Natural killer cell (primary cell): ENCODE measurements at regions of chr1 and their contacts with region 1.

Region 1: DNA sequence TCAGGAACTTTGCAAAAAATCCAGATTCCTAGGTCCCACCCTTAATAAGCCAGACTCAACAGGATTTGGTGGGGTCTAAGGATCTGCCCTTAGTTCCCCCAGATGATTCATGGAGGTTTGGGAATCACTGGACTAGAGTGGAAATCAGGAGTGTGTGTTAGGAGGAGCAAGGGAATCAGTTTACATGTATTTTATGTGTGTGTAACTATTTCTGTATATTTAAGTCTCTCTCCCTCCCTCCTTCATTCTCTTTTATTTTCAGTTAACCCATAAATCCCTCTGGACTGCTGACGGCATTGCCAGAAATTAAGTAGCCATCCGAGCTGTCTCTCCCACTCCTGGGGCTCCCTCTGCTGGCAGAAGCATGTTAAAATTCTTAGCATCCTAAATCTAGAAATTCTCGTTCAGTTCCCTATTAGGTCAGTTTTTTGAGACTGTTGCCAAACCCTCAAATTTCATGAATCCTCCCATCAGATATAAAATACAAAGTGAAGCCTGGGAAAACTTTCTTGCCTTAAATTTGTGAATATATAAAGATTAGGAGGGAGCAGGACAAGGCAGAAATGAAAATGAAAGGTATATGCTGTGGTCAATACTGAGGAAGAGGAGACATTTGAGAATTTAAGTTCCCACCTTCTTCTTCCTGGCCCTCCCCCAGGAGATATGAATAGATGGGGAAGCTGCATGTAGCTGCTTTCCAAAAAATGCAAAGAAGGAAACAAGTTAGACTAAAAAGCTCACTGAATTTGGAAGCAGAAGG is 11.7 kb upstream of the HSD11B1 start:
- DNase-seq: peak; percentile 39 to 81
- ATAC-seq: peak; percentile 63 to 65 (median 64)
- H3K4me3 ChIP-seq: no peak overlapping the region
- H3K4me3 Mint-ChIP-seq: no peak overlapping the region
- H3K27ac ChIP-seq: no peak overlapping the region
- H3K27ac Mint-ChIP-seq: no peak overlapping the region
- H3K4me1 ChIP-seq: no peaks in the 10 kb centered on the region
- H3K4me1 Mint-ChIP-seq: peaks cover 9 to 11% of the 10 kb centered on the region in 2 donors
- H3K27me3 ChIP-seq: no peaks in the 10 kb centered on the region
- H3K27me3 Mint-ChIP-seq: peaks cover 0 to 5% of the 10 kb centered on the region in 2 donors
- CTCF ChIP-seq: peak; percentile 86

Region 2: GRCh38 chr1:209576798-209577197 is 116.1 kb before region 1 on chr1:
- intact Hi-C with region 1: loop called (anchors 2 kb)
- DNase-seq: peak; percentile 51 to 75
- ATAC-seq: peak; percentile 73 to 91 (median 78)
- H3K4me3 ChIP-seq: no peak overlapping the region
- H3K4me3 Mint-ChIP-seq: no peak overlapping the region
- H3K27ac ChIP-seq: no peak overlapping the region
- H3K27ac Mint-ChIP-seq: no peak overlapping the region
- H3K4me1 ChIP-seq: no peaks in the 10 kb centered on the region
- H3K4me1 Mint-ChIP-seq: no peaks in the 10 kb centered on the region
- H3K27me3 ChIP-seq: peaks cover 9% of the 10 kb centered on the region
- H3K27me3 Mint-ChIP-seq: peaks cover 11 to 15% of the 10 kb centered on the region in 2 donors
- CTCF ChIP-seq: peak; percentile 86